Natural killer cell (primary cell): ENCODE measurements at regions of chr6 and their contacts with region 1.

Region 1: GRCh38 chr6:73675466-73676098 is 20.4 kb upstream of the CD109 start:
- DNase-seq: peak; percentile 43 to 80
- ATAC-seq: peak; percentile 89 to 94 (median 92)
- H3K4me3 ChIP-seq: no peak overlapping the region
- H3K4me3 Mint-ChIP-seq: no peak overlapping the region
- H3K27ac ChIP-seq: no peak overlapping the region
- H3K27ac Mint-ChIP-seq: no peak overlapping the region
- H3K4me1 ChIP-seq: peaks cover 2% of the 10 kb centered on the region
- H3K4me1 Mint-ChIP-seq: peaks cover 5% of the 10 kb centered on the region in 2 donors
- H3K27me3 ChIP-seq: no peaks in the 10 kb centered on the region
- H3K27me3 Mint-ChIP-seq: peaks cover 3 to 11% of the 10 kb centered on the region in 2 donors
- CTCF ChIP-seq: peak; percentile 85

Region 2: DNA sequence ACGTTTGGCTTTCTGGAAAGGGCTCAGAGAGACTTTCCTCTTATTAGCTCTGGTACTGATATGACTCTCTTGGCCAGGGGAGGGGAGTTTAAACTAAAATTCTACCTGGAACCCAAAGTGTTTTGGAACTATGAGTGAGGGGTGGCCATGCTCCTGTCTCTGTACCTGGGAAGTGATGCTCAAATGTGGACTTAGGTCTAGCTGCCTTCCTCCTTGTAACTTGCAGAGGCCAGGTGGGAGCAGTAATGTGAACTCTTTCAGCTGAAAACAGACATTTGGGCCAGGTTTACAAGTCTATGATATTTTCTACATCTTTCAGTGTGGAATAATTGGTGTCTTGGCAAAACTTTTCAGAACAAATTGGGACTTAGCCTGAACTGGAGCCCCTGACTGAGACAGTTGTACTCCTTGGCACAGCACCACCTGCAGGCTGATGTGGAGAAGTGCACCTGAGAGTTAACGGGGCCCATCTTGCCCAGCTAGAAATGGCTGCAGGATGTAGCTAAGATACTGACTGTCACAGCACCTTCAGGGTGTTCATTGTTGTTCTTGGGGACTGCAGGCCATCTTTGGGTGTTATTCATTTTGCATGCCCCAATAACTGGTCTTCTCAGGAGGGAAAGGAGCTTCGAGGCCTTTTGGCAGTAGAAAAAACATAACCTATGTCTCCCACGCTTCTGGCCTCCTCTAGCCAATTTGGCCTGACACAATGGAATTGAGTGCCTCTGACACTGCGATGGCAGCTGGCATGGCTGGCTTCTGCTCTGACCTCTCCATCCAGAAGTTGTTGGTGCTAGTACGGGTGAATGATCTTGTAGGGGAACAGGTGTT is 57.5 kb after region 1 on chr6:
- intact Hi-C with region 1: loop called (anchors 1 kb)
- DNase-seq: peak; percentile 50 to 85
- ATAC-seq: peak; percentile 92 to 100 (median 99)
- H3K4me3 ChIP-seq: no peak overlapping the region
- H3K4me3 Mint-ChIP-seq: no peak overlapping the region
- H3K27ac ChIP-seq: no peak overlapping the region
- H3K27ac Mint-ChIP-seq: no peak overlapping the region
- H3K4me1 ChIP-seq: no peaks in the 10 kb centered on the region
- H3K4me1 Mint-ChIP-seq: no peaks in the 10 kb centered on the region
- H3K27me3 ChIP-seq: no peaks in the 10 kb centered on the region
- H3K27me3 Mint-ChIP-seq: no peaks in the 10 kb centered on the region
- CTCF ChIP-seq: peak; percentile 72